ENCODE measurements at regions of chr20 and their contacts with region 1.

Region 1: GRCh38 chr20:10297684-10298240 is 79.1 kb downstream of the SNAP25 start:
- DNase-seq: no peak
- ATAC-seq: peak in 1 of 2 experiments; percentile 48; a peak in 3 of 6 replicates
- H3K4me3 ChIP-seq: no peak overlapping the region
- H3K27ac ChIP-seq: peak overlapping the region; percentile 46 to 86; a peak in 5 of 6 replicates
- H3K4me1 ChIP-seq: peaks cover 23% of the 10 kb centered on the region
- CTCF ChIP-seq: no peak
- EP300 ChIP-seq: no peak
- POLR2A ChIP-seq: no peak
- RAD21 ChIP-seq: no peak

Region 2: DNA sequence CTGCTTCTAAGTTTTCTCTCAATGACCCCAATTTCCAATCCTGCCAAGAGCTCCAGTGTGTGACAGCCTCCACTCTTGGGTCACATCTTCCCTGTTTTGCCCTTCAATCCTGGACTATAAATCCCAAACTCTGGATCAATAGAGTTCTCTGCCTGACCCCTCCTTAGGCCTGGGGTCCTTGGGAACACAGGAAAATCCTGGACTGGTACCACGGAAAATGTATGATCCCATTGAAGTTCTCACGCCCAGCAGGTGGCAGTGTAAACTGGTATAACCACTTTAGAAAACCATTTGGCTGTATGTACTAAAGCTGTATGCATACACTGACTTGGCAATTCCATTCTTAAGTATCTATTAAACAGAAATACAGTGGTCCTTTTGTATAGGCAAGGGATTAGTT is 18.8 kb after region 1 on chr20:
- CTCF ChIA-PET with region 1: interaction called, 12 read pairs
- POLR2A ChIA-PET with region 1: no interaction called
- DNase-seq: peak in 1 of 2 experiments; percentile 76
- ATAC-seq: peak in 1 of 2 experiments; percentile 54; a peak in 3 of 6 replicates
- H3K4me3 ChIP-seq: no peak overlapping the region
- H3K27ac ChIP-seq: peak overlapping the region; percentile 30 to 56; a peak in 5 of 6 replicates
- H3K4me1 ChIP-seq: peaks cover 37% of the 10 kb centered on the region
- CTCF ChIP-seq: peak; percentile 46; the same call in 2 of the 3 replicates
- EP300 ChIP-seq: no peak
- POLR2A ChIP-seq: no peak
- RAD21 ChIP-seq: peak; percentile 48 to 65; a peak in 4 of 5 replicates

Measured in A549 (cell line).